ENCODE measurements at regions of chr7 and their contacts with region 1.

Region 1: GRCh38 chr7:1503816-1504775 is at the start of gene INTS1:
- DNase-seq: peak; percentile 34
- ATAC-seq: peak; percentile 95
- H3K4me3 ChIP-seq: peak within 1 kb of the TSS; percentile 82
- H3K27ac ChIP-seq: peak within 1 kb of the TSS; percentile 61
- H3K4me1 ChIP-seq: peaks cover 26% of the 10 kb centered on the region
- H3K27me3 ChIP-seq: no peaks in the 10 kb centered on the region
- CTCF ChIP-seq: peak; percentile 69 to 90 (median 88)
- EP300 ChIP-seq: no peak
- POLR2A ChIP-seq: peak; percentile 91
- RAD21 ChIP-seq: 0 out of 2 replicates have a peak, but pooled peaks have one; percentile 17
- polyA plus RNA-seq, gene INTS1: 0.52 to 1.5 TPM

Region 2: GRCh38 chr7:1532483-1533424 is 28.7 kb after region 1 on chr7:
- CTCF ChIA-PET with region 1: interaction called, 9 read pairs
- POLR2A ChIA-PET with region 1: interaction called, 5 read pairs
- RAD21 ChIA-PET with region 1: no interaction called
- SMC1A ChIA-PET with region 1: no interaction called
- in situ Hi-C with region 1: no loop called
- intact Hi-C with region 1: loop called (anchors 2 kb)
- DNase-seq: no peak
- ATAC-seq: peak; percentile 62
- H3K4me3 ChIP-seq: peak overlapping the region; percentile 63
- H3K27ac ChIP-seq: peak overlapping the region; percentile 33
- H3K4me1 ChIP-seq: peaks cover 13% of the 10 kb centered on the region
- H3K27me3 ChIP-seq: no peaks in the 10 kb centered on the region
- CTCF ChIP-seq: no peak
- EP300 ChIP-seq: no peak
- POLR2A ChIP-seq: peak; percentile 47
- RAD21 ChIP-seq: no peak

Region 3: DNA sequence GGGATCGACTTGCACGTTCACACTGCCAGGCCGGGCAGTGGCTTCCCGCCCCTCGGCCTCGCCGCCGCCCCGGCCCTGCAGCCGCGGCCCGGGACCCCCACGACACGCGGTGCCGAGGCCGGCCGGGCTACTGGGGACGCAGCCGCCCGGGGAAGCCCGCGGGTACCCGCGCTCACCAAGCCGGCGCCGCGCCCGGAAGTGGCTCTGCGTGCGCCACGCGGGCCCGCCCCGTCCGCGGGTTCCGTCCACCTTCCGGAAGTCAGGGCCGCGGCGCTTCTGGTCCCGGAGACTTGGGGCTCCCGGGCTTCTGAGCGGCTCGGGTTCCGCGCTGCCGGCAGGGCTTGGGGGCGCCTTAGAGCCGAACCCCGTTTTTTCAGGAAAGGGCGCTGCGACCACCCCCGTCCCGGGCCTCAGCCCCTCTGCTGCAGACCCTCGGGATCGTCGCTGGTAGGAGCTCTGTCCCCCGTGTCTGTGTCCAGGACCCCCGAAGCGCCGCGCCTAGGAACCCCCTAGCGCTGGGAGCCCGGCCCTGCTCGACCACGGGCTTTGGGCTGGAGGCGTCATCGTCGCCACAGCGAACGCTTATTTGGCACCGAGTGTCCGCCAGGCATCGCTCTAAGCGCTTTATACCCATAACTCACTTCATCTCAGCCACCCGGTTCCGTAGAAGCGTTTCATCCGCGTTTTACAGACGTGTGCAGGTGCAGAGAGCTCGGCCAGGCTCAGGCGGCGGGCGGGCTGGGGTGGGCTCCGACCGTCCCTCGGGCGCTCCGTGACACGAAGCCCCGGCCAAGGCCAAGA is 65.9 kb after region 1 on chr7 and contains the start of gene PSMG3:
- CTCF ChIA-PET with region 1: no interaction called
- POLR2A ChIA-PET with region 1: no interaction called
- RAD21 ChIA-PET with region 1: no interaction called
- SMC1A ChIA-PET with region 1: no interaction called
- in situ Hi-C with region 1: no loop called
- intact Hi-C with region 1: loop called (anchors 5 kb)
- DNase-seq: peak; percentile 32
- ATAC-seq: peak; percentile 94
- H3K4me3 ChIP-seq: peak within 1 kb of the TSS; percentile 97
- H3K27ac ChIP-seq: peak within 1 kb of the TSS; percentile 91
- H3K4me1 ChIP-seq: no peaks in the 10 kb centered on the region; the same call in 1 of the 2 replicates
- H3K27me3 ChIP-seq: no peaks in the 10 kb centered on the region
- CTCF ChIP-seq: peak; percentile 11 to 35 (median 27); a peak in 4 of 6 replicates
- EP300 ChIP-seq: no peak
- POLR2A ChIP-seq: peak; percentile 80
- RAD21 ChIP-seq: no peak
- polyA plus RNA-seq, gene PSMG3: 23.9 to 40.5 TPM

Measured in GM12878 (cell line).